ENCODE measurements at regions of chr21 and their contacts with region 1.

Region 1: DNA sequence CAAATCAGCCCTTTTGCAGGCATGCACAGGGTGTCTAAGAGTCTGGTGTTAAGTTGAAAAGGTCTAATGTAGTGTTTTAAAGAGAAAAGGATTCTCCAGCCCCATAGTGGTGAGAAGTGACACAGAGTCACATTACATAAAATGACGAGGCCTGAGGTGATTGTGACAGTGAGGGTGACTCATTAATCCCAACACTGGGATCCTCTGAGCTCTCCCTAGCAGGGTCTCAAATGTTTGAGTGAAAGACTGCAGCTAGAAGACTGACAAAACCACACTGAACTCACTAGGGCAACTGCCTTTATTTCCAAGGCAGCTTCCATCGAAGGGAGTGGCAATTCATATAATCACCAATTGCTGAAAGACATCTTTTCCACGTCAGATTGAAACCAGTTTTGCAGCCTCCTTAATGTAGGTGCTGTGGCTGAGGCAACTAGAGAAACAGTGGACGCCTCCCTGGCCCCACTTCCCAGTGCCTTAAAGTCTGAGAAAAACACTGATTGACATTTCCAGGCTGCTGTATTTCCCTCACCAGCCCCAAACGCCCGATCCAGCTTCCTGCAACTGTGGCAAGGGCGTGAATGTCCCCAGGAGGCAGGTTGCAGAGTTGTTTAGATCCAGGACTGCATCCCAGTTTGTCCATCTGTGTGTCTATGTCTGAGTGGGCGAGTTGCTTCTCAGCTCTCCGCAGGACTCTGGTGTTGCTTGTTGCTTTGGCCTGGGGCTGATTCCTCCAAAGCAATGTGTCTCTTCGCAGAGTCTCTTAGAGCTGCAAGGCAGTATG is 81.4 kb downstream of the RUNX1 start:
- DNase-seq: peak; percentile 73
- H3K4me3 Mint-ChIP-seq: peak overlapping the region; percentile 47
- H3K27ac Mint-ChIP-seq: peak overlapping the region; percentile 93
- H3K4me1 Mint-ChIP-seq: peaks cover 84% of the 10 kb centered on the region
- H3K27me3 Mint-ChIP-seq: no peaks in the 10 kb centered on the region

Region 2: GRCh38 chr21:34820051-34820450 is 147.6 kb before region 1 on chr21:
- CTCF ChIA-PET with region 1: no interaction called
- intact Hi-C with region 1: no loop called
- DNase-seq: no peak
- H3K4me3 Mint-ChIP-seq: no peak overlapping the region
- H3K27ac Mint-ChIP-seq: peak overlapping the region; percentile 25
- H3K4me1 Mint-ChIP-seq: peaks cover 12% of the 10 kb centered on the region
- H3K27me3 Mint-ChIP-seq: no peaks in the 10 kb centered on the region

Region 3: DNA sequence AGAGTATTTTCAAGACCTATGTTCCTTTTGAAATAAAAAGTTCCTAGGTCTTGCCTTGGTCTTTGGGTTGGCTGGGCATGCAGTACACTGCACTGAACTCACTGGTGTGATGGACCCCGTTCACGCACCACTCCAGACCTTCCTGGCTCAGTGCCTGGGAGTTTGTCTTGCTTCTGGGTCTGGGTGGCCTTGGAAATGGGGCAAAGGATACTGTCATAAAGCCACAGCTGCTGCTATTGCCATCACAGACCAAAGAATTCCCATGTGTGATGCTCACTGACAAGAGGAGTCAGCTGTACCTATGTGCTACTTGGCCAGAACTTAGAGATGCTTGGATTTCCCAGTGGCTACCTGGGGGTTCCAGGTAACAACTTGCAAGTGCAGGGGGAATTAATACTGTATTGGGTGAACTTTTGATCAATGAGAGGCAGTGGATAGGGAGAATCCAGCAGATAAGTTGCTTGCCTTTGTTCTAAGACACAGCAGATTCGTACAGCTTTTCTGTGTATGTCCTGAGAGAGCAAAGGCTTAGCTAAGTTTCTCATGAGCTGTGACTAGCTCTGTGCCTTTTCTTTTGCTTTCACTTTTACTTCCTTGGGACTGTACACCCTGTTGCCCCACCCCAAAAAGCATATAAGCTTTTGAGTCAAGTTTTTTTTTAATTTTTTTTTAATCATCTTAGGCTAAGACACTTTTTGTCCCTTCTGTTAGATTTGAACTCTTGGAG is 33.9 kb before region 1 on chr21:
- CTCF ChIA-PET with region 1: interaction called, 6 read pairs
- intact Hi-C with region 1: loop called (anchors 1 kb)
- DNase-seq: peak; percentile 51
- H3K4me3 Mint-ChIP-seq: peak overlapping the region; percentile 77
- H3K27ac Mint-ChIP-seq: peak overlapping the region; percentile 97
- H3K4me1 Mint-ChIP-seq: peaks cover 80% of the 10 kb centered on the region
- H3K27me3 Mint-ChIP-seq: no peaks in the 10 kb centered on the region

Region 4: DNA sequence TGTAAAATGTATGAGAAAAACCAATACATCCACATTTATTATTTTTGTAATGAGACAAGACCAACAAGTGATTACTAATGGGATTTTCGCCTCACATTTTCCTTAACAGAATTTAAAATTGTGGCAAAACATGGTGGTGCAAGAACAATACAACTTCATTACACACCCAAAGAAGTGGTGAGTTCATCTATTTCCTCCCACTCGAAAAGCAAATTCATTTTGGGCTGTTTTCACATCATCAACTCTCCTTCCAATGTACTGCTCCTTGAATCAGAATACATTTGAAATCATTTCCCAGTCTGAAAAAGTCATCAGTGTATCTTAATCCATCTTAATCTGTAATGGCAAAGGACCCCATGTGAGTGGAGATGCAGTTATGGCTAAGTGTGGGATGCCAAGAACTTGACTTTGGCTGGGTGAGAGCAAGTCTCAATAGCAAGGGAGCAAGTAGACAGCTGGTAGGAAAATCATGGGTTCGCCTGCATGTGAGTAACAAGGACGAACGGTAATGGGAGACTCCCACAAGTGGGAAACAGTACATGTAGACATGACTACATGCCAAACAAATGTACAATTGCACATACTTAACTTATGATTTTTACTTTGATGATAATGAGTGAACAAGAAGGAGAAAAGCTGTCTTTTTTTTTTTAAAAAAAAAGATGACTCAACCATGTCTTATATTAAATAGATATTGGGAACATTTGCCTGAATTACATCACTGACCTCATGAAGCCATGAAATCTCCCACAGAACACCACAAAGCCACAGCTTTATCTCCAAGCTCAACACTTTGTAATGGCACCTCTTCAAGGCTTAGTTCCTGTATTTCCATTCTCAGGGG is 35.4 kb after region 1 on chr21:
- CTCF ChIA-PET with region 1: no interaction called
- intact Hi-C with region 1: no loop called
- DNase-seq: no peak
- H3K4me3 Mint-ChIP-seq: no peak overlapping the region
- H3K27ac Mint-ChIP-seq: peak overlapping the region; percentile 73
- H3K4me1 Mint-ChIP-seq: peaks cover 90% of the 10 kb centered on the region
- H3K27me3 Mint-ChIP-seq: no peaks in the 10 kb centered on the region

Region 5: GRCh38 chr21:35020902-35021301 is 53.2 kb after region 1 on chr21:
- CTCF ChIA-PET with region 1: interaction called, 3 read pairs
- intact Hi-C with region 1: loop called (anchors 1 kb)
- DNase-seq: peak; percentile 52
- H3K4me3 Mint-ChIP-seq: no peak overlapping the region
- H3K27ac Mint-ChIP-seq: peak overlapping the region; percentile 80
- H3K4me1 Mint-ChIP-seq: peaks cover 89% of the 10 kb centered on the region
- H3K27me3 Mint-ChIP-seq: no peaks in the 10 kb centered on the region

Region 6: DNA sequence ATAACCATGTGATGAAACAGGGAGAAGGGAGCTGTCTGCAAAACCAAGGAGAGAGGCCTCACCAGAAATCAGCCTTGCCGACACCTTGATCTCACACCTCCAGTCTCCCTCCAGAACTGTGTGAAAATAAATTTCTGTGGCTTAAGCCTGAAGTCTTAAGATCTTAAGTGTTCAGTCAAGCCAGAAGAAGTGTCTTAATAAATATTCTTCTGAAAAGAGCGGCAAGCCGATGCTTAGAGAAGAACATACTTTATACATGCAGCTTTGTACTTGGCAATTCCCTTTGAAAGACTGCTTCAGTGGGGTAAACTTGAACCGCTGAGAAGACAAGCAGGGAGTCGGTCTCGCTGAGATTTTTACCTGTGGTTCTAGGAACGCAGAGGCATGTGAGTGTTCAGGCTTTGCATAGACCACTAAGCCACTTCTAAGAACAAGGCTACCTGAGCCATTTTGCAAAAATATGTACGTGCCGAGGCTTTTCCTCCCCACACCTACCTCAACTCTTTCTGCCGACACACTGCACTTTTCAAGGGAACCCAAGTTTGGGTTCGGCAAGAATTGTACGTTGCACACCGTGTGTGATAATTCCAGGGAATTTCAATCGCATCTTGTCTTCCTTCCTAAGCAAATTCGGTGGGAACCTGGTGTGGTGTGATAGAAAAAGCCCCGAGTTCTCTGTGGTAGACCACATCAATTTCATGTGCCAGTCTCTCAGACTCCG is 78.0 kb after region 1 on chr21:
- CTCF ChIA-PET with region 1: interaction called, 5 read pairs
- intact Hi-C with region 1: loop called (anchors 1 kb)
- DNase-seq: peak; percentile 59
- H3K4me3 Mint-ChIP-seq: peak overlapping the region; percentile 86
- H3K27ac Mint-ChIP-seq: peak overlapping the region; percentile 97
- H3K4me1 Mint-ChIP-seq: peaks cover 81% of the 10 kb centered on the region
- H3K27me3 Mint-ChIP-seq: no peaks in the 10 kb centered on the region

Region 7: GRCh38 chr21:35159881-35160280 is 192.2 kb after region 1 on chr21:
- CTCF ChIA-PET with region 1: no interaction called
- intact Hi-C with region 1: no loop called
- DNase-seq: no peak
- H3K4me3 Mint-ChIP-seq: no peak overlapping the region
- H3K27ac Mint-ChIP-seq: no peak overlapping the region
- H3K4me1 Mint-ChIP-seq: peaks cover 3% of the 10 kb centered on the region
- H3K27me3 Mint-ChIP-seq: no peaks in the 10 kb centered on the region

Measured in activated naive CD4-positive, alpha-beta T cell treated with anti-CD3 and anti-CD28 coated beads for 36 hours (primary cell).